ENCODE measurements at regions of chr3 and their contacts with region 1.

Region 1: GRCh38 chr3:25706213-25706612 is 41.5 kb upstream of the TOP2B start:
- DNase-seq: no peak
- ATAC-seq: no peak
- H3K4me3 ChIP-seq: no peak overlapping the region
- H3K27ac ChIP-seq: no peak overlapping the region
- H3K4me1 ChIP-seq: no peaks in the 10 kb centered on the region
- CTCF ChIP-seq: no peak
- EP300 ChIP-seq: no peak
- POLR2A ChIP-seq: no peak
- RAD21 ChIP-seq: no peak

Region 2: GRCh38 chr3:25723802-25724201 is 17.6 kb after region 1 on chr3:
- CTCF ChIA-PET with region 1: no interaction called
- POLR2A ChIA-PET with region 1: interaction called, 11 read pairs
- DNase-seq: no peak
- ATAC-seq: no peak
- H3K4me3 ChIP-seq: no peak overlapping the region
- H3K27ac ChIP-seq: no peak overlapping the region
- H3K4me1 ChIP-seq: no peaks in the 10 kb centered on the region
- CTCF ChIP-seq: no peak
- EP300 ChIP-seq: no peak
- POLR2A ChIP-seq: no peak
- RAD21 ChIP-seq: no peak